Caco-2 (cell line): ENCODE measurements at regions of chr2 and their contacts with region 1.

Region 1: DNA sequence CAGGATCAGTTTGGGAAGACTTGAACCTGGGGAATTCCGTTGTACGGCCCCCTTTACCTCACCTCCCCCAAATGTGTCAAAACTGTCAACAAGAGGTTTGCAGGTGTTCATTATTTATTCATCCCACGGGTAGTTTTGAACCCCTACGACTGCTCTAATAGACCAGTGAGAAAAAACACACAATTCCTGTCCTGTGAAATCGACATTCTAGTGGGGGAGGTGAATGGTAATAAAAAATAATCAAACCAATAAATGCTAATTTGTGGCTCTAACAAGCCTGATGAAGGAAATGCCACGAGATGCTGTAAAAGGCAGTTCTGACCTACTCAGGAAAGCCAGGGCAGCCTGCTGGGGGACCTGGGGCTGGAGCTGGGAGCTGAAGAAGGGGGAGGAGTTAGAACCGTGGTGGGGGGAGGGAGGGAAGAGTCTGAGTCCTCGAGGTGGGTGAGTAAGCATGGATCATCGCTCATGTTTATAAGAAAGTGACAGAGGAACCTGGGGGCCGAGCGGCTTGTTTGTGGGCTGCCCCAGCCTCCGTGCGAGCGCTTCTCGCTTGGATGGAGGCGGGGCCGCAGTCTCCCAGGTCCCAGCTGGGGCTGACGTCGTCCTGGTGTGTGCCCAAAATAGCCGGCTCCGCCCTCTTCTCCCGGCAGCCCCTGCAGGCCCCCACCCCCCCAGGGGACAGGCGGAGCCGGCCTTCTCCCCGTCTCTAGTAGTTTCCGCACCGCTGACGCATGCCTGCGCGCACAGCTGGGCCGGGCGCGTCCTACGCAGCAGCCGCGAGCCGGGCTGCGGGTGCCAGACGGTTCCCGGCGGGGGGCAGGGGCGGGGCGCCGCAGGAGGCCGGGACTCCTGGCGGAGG is at the start of gene DNAJB2:
- DNase-seq: peak; percentile 98
- H3K4me3 ChIP-seq: peak within 1 kb of the TSS; percentile 85
- H3K4me3 Mint-ChIP-seq: peak within 1 kb of the TSS; percentile 98
- H3K27ac Mint-ChIP-seq: peak within 1 kb of the TSS; percentile 98
- H3K4me1 ChIP-seq: peaks cover 36% of the 10 kb centered on the region
- H3K4me1 Mint-ChIP-seq: peaks cover 13% of the 10 kb centered on the region
- H3K27me3 ChIP-seq: no peaks in the 10 kb centered on the region
- H3K27me3 Mint-ChIP-seq: no peaks in the 10 kb centered on the region
- CTCF ChIP-seq: no peak
- total RNA-seq, gene DNAJB2: 60.6 and 61.2 TPM in 2 replicates

Region 2: GRCh38 chr2:218569661-218570500 is 709.0 kb before region 1 on chr2:
- CTCF ChIA-PET with region 1: no interaction called
- POLR2A ChIA-PET with region 1: no interaction called
- intact Hi-C with region 1: no loop called
- DNase-seq: peak in 1 of 2 experiments; percentile 12
- H3K4me3 ChIP-seq: peak overlapping the region; percentile 60
- H3K4me3 Mint-ChIP-seq: peak overlapping the region; percentile 86
- H3K27ac Mint-ChIP-seq: peak overlapping the region; percentile 86
- H3K4me1 ChIP-seq: peaks cover 15% of the 10 kb centered on the region
- H3K4me1 Mint-ChIP-seq: peaks cover 36% of the 10 kb centered on the region
- H3K27me3 ChIP-seq: no peaks in the 10 kb centered on the region
- H3K27me3 Mint-ChIP-seq: no peaks in the 10 kb centered on the region
- CTCF ChIP-seq: no peak

Region 3: GRCh38 chr2:219206442-219207253 is 72.2 kb before region 1 on chr2 and contains the start of gene ZFAND2B:
- CTCF ChIA-PET with region 1: no interaction called
- POLR2A ChIA-PET with region 1: no interaction called
- intact Hi-C with region 1: no loop called
- DNase-seq: peak; percentile 93 to 98
- H3K4me3 ChIP-seq: peak within 1 kb of the TSS; percentile 78
- H3K4me3 Mint-ChIP-seq: peak within 1 kb of the TSS; percentile 81
- H3K27ac Mint-ChIP-seq: peak within 1 kb of the TSS; percentile 84
- H3K4me1 ChIP-seq: peaks cover 8% of the 10 kb centered on the region
- H3K4me1 Mint-ChIP-seq: peaks cover 5% of the 10 kb centered on the region
- H3K27me3 ChIP-seq: no peaks in the 10 kb centered on the region
- H3K27me3 Mint-ChIP-seq: no peaks in the 10 kb centered on the region
- CTCF ChIP-seq: no peak
- total RNA-seq, gene ZFAND2B: 37.3 and 41.8 TPM in 2 replicates

Region 4: GRCh38 chr2:219218732-219219701 is 59.9 kb before region 1 on chr2 and contains the start of gene ABCB6:
- CTCF ChIA-PET with region 1: interaction called, 8 read pairs
- POLR2A ChIA-PET with region 1: interaction called, 7 read pairs
- intact Hi-C with region 1: loop called (anchors 1 kb)
- DNase-seq: peak; percentile 97
- H3K4me3 ChIP-seq: peak within 1 kb of the TSS; percentile 89
- H3K4me3 Mint-ChIP-seq: peak within 1 kb of the TSS; percentile 96
- H3K27ac Mint-ChIP-seq: peak within 1 kb of the TSS; percentile 95
- H3K4me1 ChIP-seq: peaks cover 18% of the 10 kb centered on the region
- H3K4me1 Mint-ChIP-seq: no peaks in the 10 kb centered on the region
- H3K27me3 ChIP-seq: no peaks in the 10 kb centered on the region
- H3K27me3 Mint-ChIP-seq: no peaks in the 10 kb centered on the region
- CTCF ChIP-seq: no peak
- total RNA-seq, gene ABCB6: 66.0 and 68.6 TPM in 2 replicates

Region 5: GRCh38 chr2:219245148-219245898 is 33.6 kb before region 1 on chr2 and contains the starts of genes GLB1L and STK16:
- CTCF ChIA-PET with region 1: interaction called, 25 read pairs
- POLR2A ChIA-PET with region 1: interaction called, 12 read pairs
- intact Hi-C with region 1: loop called (anchors 1 kb)
- DNase-seq: peak; percentile 94
- H3K4me3 ChIP-seq: peak within 1 kb of the TSS; percentile 73
- H3K4me3 Mint-ChIP-seq: peak within 1 kb of the TSS; percentile 82
- H3K27ac Mint-ChIP-seq: peak within 1 kb of the TSS; percentile 90
- H3K4me1 ChIP-seq: peaks cover 33% of the 10 kb centered on the region
- H3K4me1 Mint-ChIP-seq: peaks cover 23% of the 10 kb centered on the region
- H3K27me3 ChIP-seq: no peaks in the 10 kb centered on the region
- H3K27me3 Mint-ChIP-seq: no peaks in the 10 kb centered on the region
- CTCF ChIP-seq: no peak
- total RNA-seq, gene GLB1L: 3.3 and 4.3 TPM in 2 replicates
- total RNA-seq, gene STK16: 26.1 and 26.6 TPM in 2 replicates

Region 6: DNA sequence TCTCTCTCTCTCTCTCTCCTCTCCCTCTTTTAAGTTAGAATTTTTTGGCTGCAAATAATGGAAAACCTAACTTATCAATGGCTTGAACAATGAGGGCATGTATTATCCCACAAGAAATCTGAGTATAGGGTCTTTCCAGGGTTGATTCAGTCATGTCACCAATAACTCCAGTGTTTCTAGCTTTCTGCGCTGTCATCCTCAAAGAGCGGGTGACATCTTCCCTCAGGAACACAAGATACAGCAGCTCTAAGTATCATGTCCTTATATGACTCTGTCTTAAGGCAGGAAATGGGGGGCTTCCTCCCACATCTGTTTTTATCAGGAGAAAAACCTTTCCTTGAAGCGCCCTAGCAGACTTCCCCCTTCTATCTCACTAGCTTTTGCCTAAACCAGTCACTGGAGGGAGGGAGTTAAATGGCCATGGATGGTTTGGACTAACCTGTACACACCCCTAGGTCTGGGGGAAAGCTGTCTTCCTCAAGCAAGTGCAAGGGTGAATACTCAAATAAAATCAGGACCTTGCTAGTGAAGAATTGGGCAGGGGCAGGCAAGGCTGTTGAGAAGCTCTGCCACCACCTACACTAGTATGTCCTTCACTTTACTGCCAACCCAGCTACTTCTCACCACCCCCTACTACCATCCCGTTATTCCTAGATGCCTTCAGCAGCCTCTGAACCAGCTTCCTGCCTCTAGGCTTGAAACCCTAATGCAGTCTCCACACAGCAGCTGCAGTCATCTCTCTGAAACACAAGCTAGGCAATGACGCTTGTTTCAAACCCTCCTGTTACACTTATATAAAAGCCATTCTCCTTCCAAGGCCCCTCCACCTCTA is 17.6 kb before region 1 on chr2:
- CTCF ChIA-PET with region 1: no interaction called
- POLR2A ChIA-PET with region 1: interaction called, 18 read pairs
- intact Hi-C with region 1: no loop called
- DNase-seq: no peak
- H3K4me3 ChIP-seq: no peak overlapping the region
- H3K4me3 Mint-ChIP-seq: no peak overlapping the region
- H3K27ac Mint-ChIP-seq: no peak overlapping the region
- H3K4me1 ChIP-seq: no peaks in the 10 kb centered on the region
- H3K4me1 Mint-ChIP-seq: no peaks in the 10 kb centered on the region
- H3K27me3 ChIP-seq: no peaks in the 10 kb centered on the region
- H3K27me3 Mint-ChIP-seq: peaks cover 13% of the 10 kb centered on the region
- CTCF ChIP-seq: no peak

Region 7: GRCh38 chr2:219509780-219510511 is 231.1 kb after region 1 on chr2:
- CTCF ChIA-PET with region 1: interaction called, 10 read pairs
- POLR2A ChIA-PET with region 1: no interaction called
- intact Hi-C with region 1: no loop called
- DNase-seq: peak; percentile 80 to 81
- H3K4me3 ChIP-seq: peak overlapping the region; percentile 64
- H3K4me3 Mint-ChIP-seq: peak overlapping the region; percentile 80
- H3K27ac Mint-ChIP-seq: no peak overlapping the region
- H3K4me1 ChIP-seq: peaks cover 12% of the 10 kb centered on the region
- H3K4me1 Mint-ChIP-seq: peaks cover 18% of the 10 kb centered on the region
- H3K27me3 ChIP-seq: peaks cover 5% of the 10 kb centered on the region; the same call in 1 of the 2 replicates
- H3K27me3 Mint-ChIP-seq: peaks cover 20% of the 10 kb centered on the region
- CTCF ChIP-seq: peak; percentile 68 to 90